ENCODE measurements at regions of chr9 and their contacts with region 1.

Region 1: DNA sequence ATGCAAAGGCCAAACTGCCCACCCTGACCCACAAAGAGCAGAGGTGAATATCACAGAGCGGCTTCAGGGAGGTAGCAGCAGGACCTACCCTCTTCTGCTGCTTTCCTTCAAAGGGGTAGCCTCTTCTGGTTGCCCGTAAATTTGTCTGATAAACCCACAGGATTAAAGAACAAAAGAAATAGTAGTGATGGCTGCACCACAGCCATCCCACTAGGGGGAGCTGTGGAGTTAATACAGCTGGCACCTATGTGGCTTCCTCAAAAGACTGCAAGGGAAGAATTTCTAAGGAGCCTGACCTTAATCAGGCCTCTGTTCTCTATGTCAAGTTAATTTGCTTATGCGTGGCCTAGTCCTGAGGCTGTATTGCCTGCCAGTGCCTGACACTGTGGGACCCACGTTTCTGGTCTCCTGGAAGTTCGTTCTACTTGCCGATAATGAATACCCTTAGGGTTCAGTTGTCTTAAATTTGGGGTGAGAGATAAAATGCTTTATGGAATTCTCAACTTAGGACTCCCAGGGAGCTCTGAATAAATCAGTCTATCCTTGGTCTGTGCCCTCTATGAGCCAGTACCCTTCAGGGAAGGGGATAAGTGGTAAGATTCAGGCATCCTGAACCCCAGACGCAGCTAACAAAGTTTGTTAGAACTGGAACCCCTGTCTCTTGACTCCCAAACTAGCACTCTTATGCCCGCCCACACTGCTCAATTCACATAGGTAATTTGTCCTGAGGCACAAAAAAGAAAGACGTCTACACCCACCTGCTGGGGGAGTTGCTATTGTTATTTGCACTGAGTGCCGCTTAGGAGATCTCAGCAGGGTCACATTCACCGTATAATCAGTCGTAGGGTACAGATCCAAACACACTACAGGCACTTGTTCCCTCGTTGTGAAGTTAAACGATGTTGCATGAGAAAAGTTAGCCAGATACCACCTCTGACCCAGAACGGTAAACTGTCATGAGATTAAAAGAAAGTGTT is 77.1 kb downstream of the SUSD1 start:
- DNase-seq: peak; percentile 74
- H3K4me3 Mint-ChIP-seq: no peak overlapping the region
- H3K27ac Mint-ChIP-seq: no peak overlapping the region
- H3K4me1 Mint-ChIP-seq: peaks cover 37% of the 10 kb centered on the region
- H3K27me3 Mint-ChIP-seq: no peaks in the 10 kb centered on the region

Region 2: GRCh38 chr9:111766066-111766465 is 331.9 kb before region 1 on chr9:
- CTCF ChIA-PET with region 1: no interaction called
- POLR2A ChIA-PET with region 1: no interaction called
- DNase-seq: no peak
- H3K4me3 Mint-ChIP-seq: no peak overlapping the region
- H3K27ac Mint-ChIP-seq: no peak overlapping the region
- H3K4me1 Mint-ChIP-seq: no peaks in the 10 kb centered on the region
- H3K27me3 Mint-ChIP-seq: no peaks in the 10 kb centered on the region

Region 3: GRCh38 chr9:111992523-111992922 is 105.5 kb before region 1 on chr9:
- CTCF ChIA-PET with region 1: no interaction called
- POLR2A ChIA-PET with region 1: no interaction called
- DNase-seq: peak; percentile 25
- H3K4me3 Mint-ChIP-seq: no peak overlapping the region
- H3K27ac Mint-ChIP-seq: no peak overlapping the region
- H3K4me1 Mint-ChIP-seq: peaks cover 16% of the 10 kb centered on the region
- H3K27me3 Mint-ChIP-seq: peaks cover 34% of the 10 kb centered on the region

Region 4: GRCh38 chr9:112086627-112087026 is 11.4 kb before region 1 on chr9:
- CTCF ChIA-PET with region 1: interaction called, 13 read pairs
- POLR2A ChIA-PET with region 1: interaction called, 5 read pairs
- DNase-seq: no peak
- H3K4me3 Mint-ChIP-seq: no peak overlapping the region
- H3K27ac Mint-ChIP-seq: no peak overlapping the region
- H3K4me1 Mint-ChIP-seq: peaks cover 2% of the 10 kb centered on the region
- H3K27me3 Mint-ChIP-seq: no peaks in the 10 kb centered on the region

Region 5: DNA sequence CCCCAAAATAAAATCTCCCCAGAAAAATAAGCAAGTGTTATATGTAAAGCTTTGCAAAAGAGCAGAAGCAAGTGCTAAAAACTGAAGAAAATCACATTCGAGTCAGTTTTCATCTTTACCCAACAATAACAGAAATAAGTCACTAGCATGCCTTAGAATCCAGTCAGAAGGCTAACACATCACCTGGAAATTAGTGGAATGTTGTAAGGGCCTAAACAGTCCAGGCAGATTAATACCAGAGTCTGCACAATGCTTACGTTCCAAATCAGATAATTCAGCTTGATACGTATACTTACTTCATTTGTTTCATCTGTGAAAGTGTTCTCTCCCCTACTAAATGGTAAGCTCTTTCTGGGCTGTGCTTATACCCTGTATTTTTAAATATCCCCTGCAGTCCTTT is 34.4 kb after region 1 on chr9:
- CTCF ChIA-PET with region 1: no interaction called
- POLR2A ChIA-PET with region 1: no interaction called
- DNase-seq: no peak
- H3K4me3 Mint-ChIP-seq: no peak overlapping the region
- H3K27ac Mint-ChIP-seq: no peak overlapping the region
- H3K4me1 Mint-ChIP-seq: no peaks in the 10 kb centered on the region
- H3K27me3 Mint-ChIP-seq: no peaks in the 10 kb centered on the region

Region 6: GRCh38 chr9:112158656-112159367 is 60.8 kb after region 1 on chr9:
- CTCF ChIA-PET with region 1: no interaction called
- POLR2A ChIA-PET with region 1: no interaction called
- DNase-seq: no peak
- H3K4me3 Mint-ChIP-seq: no peak overlapping the region
- H3K27ac Mint-ChIP-seq: no peak overlapping the region
- H3K4me1 Mint-ChIP-seq: peaks cover 2% of the 10 kb centered on the region
- H3K27me3 Mint-ChIP-seq: no peaks in the 10 kb centered on the region

Region 7: DNA sequence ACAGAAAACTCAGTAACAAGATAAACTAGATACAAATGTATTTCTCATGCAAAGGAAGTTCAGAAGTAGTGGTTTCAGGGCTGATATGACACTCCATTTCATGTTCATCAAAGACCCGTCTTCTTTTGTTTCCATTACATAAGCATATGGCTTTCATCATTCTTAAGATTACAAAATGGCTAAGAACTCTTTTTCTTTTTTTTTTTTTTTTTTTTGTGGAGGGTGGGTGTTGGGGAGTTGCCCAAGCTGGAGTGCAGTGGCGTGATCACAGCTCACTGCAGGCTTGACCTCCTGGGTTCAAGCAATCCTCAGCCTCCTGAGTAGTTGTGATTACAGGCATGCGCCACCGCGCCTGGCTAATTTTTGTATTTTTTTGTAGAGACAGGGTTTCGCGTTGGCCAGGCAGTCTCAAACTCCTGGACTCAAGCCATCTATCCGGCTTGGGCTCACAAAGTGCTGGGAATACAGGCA is 257.5 kb after region 1 on chr9:
- CTCF ChIA-PET with region 1: interaction called, 84 read pairs
- POLR2A ChIA-PET with region 1: no interaction called
- DNase-seq: no peak
- H3K4me3 Mint-ChIP-seq: no peak overlapping the region
- H3K27ac Mint-ChIP-seq: no peak overlapping the region
- H3K4me1 Mint-ChIP-seq: peaks cover 20% of the 10 kb centered on the region
- H3K27me3 Mint-ChIP-seq: peaks cover 3% of the 10 kb centered on the region

Region 8: DNA sequence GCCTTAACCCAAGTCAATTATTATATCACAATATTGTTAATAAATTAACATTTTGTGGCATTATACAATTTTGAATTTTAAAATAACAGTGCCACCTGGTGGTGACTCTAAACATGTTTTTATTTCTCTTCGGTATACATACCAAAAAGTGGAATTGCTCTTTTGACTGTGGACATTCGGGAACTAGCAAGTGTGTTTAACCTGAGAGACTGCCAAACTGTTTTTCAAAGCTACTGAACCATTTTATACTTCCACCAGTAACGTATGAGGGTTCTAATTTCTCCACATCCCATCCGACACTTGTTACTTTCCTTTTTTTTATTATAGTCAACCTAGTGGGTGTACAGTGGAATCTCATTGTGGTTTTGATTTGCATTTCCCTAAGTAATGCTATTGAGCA is 263.6 kb after region 1 on chr9:
- CTCF ChIA-PET with region 1: interaction called, 84 read pairs
- POLR2A ChIA-PET with region 1: no interaction called
- DNase-seq: no peak
- H3K4me3 Mint-ChIP-seq: no peak overlapping the region
- H3K27ac Mint-ChIP-seq: no peak overlapping the region
- H3K4me1 Mint-ChIP-seq: peaks cover 8% of the 10 kb centered on the region
- H3K27me3 Mint-ChIP-seq: peaks cover 9% of the 10 kb centered on the region